ENCODE measurements at regions of chr6 and their contacts with region 1.

Region 1: GRCh38 chr6:54846243-54846856 is at the start of gene FAM83B:
- DNase-seq: peak; percentile 98
- H3K4me3 ChIP-seq: peak within 1 kb of the TSS; percentile 70 to 84 (median 82)
- H3K27ac ChIP-seq: peak within 1 kb of the TSS; percentile 99
- H3K4me1 ChIP-seq: peaks cover 27% of the 10 kb centered on the region
- H3K27me3 ChIP-seq: no peaks in the 10 kb centered on the region
- CTCF ChIP-seq: peak in 1 of 2 donors; percentile 8
- total RNA-seq, gene FAM83B: 52.2 to 101 TPM

Region 2: DNA sequence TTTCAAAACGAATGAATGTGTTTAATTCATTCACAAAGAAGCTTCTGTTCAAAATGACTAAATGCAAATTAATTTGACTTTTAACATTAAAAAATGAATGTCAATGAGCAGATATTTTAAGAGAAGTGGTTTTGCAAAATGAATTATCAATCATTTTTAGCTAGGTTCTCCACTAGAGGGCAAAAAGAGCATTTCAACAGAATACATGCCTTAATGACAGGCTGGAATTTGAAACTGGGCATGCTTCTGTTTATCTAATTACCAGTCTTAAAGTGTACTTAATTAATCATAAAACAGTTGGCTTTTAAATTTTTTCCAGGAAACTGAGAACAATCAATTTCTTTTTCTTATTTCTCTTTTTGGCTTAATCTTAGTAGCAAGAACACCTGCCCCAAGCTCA is 601.9 kb before region 1 on chr6:
- CTCF ChIA-PET with region 1: no interaction called
- dilution Hi-C with region 1: no loop called
- in situ Hi-C with region 1: no loop called
- intact Hi-C with region 1: loop called (anchors 5 kb)
- DNase-seq: peak; percentile 10
- H3K4me3 ChIP-seq: no peak overlapping the region
- H3K27ac ChIP-seq: no peak overlapping the region
- H3K4me1 ChIP-seq: no peaks in the 10 kb centered on the region
- H3K27me3 ChIP-seq: no peaks in the 10 kb centered on the region
- CTCF ChIP-seq: peak; percentile 63 to 67

Region 3: GRCh38 chr6:54473328-54473727 is 373.0 kb before region 1 on chr6:
- CTCF ChIA-PET with region 1: no interaction called
- dilution Hi-C with region 1: no loop called
- in situ Hi-C with region 1: no loop called
- intact Hi-C with region 1: no loop called
- DNase-seq: peak; percentile 26
- H3K4me3 ChIP-seq: no peak overlapping the region
- H3K27ac ChIP-seq: no peak overlapping the region
- H3K4me1 ChIP-seq: no peaks in the 10 kb centered on the region
- H3K27me3 ChIP-seq: no peaks in the 10 kb centered on the region
- CTCF ChIP-seq: no peak

Region 4: DNA sequence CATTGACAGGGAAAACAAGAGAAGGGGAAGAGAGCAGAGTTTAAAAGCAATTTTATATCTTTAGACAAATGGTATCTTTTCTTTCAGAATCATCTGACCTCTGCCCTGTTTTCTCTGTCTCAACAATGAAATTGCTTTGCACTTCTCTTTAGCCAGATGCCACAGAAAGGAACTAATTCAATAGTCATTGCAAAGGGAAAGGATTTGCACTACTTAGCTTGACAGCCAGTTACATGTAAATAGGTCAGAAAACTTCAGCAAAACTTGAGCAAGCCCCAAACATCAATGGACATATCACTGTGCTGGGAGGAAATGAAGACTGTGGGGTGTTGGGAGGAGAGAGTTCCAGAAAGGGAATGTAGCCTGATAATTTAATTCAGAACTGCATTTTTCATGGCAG is 181.1 kb before region 1 on chr6:
- CTCF ChIA-PET with region 1: no interaction called
- dilution Hi-C with region 1: no loop called
- in situ Hi-C with region 1: no loop called
- intact Hi-C with region 1: no loop called
- DNase-seq: no peak
- H3K4me3 ChIP-seq: no peak overlapping the region
- H3K27ac ChIP-seq: no peak overlapping the region
- H3K4me1 ChIP-seq: no peaks in the 10 kb centered on the region
- H3K27me3 ChIP-seq: no peaks in the 10 kb centered on the region
- CTCF ChIP-seq: no peak

Region 5: DNA sequence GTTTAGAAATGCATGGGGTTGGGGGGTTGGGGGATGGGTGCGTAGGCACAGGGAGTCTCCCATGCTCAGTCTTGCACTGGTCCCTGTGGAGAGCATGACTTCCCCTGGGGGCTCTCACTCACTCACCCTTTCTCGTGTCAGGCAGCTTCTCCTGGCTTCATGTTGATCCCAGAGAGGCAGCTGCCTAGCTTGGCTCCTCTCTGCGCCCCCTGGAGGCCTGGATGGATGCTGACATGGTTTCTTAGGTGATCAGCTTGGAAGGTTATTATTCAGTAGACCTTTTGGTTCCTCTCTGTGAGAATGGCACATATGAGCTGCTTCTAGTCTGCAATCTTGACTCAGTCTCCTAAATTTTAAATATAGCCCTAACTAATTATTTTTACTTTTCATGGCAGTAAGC is 109.1 kb before region 1 on chr6:
- CTCF ChIA-PET with region 1: no interaction called
- dilution Hi-C with region 1: no loop called
- in situ Hi-C with region 1: loop called in 1 of 2 experiments (anchors 25 kb)
- intact Hi-C with region 1: no loop called
- DNase-seq: no peak
- H3K4me3 ChIP-seq: no peak overlapping the region
- H3K27ac ChIP-seq: no peak overlapping the region
- H3K4me1 ChIP-seq: no peaks in the 10 kb centered on the region
- H3K27me3 ChIP-seq: no peaks in the 10 kb centered on the region
- CTCF ChIP-seq: peak; percentile 33 to 34

Region 6: DNA sequence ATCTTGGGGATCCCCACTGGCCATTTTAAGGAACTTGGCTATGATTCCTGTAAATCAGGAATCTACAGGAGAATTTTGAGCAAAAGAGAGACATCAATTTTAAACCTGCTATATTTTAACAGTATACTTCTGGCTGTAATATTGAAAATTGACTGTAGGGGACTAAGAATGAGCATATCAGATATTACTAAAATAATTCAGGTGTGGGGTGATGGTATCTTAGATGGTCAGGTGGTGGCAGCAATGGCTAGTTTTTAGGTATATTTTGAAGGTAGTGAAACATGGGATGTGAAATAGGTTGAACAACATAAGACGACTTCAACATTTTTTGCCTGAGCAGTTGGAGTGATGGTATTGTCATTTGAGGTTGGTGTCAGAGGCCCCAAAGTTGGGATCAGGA is 32.3 kb after region 1 on chr6:
- CTCF ChIA-PET with region 1: no interaction called
- dilution Hi-C with region 1: no loop called
- in situ Hi-C with region 1: no loop called
- intact Hi-C with region 1: loop called (anchors 2 kb)
- DNase-seq: no peak
- H3K4me3 ChIP-seq: no peak overlapping the region
- H3K27ac ChIP-seq: no peak overlapping the region
- H3K4me1 ChIP-seq: peaks cover 59% of the 10 kb centered on the region
- H3K27me3 ChIP-seq: no peaks in the 10 kb centered on the region
- CTCF ChIP-seq: no peak

Region 7: GRCh38 chr6:54910431-54910884 is 64.1 kb after region 1 on chr6:
- CTCF ChIA-PET with region 1: no interaction called
- dilution Hi-C with region 1: no loop called
- in situ Hi-C with region 1: no loop called
- intact Hi-C with region 1: no loop called
- DNase-seq: no peak
- H3K4me3 ChIP-seq: no peak overlapping the region
- H3K27ac ChIP-seq: no peak overlapping the region
- H3K4me1 ChIP-seq: no peaks in the 10 kb centered on the region
- H3K27me3 ChIP-seq: no peaks in the 10 kb centered on the region
- CTCF ChIP-seq: no peak

Region 8: DNA sequence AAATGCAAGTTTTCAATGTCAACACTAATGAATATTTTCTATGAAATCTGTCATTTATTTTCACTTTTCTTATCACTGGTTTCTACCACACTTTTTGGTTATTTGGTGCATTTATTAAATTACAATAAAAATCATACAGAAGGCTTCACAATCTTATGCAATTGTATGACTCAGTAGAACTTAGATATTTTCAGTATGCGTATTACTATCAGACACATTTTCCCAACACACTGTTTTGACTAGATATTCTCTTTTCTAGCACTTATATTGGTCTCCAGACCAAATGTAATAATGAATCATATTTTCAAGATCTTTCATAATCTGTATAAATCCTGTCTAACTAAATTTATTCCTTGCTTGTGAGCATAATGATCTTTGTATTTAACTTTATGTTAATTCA is 74.3 kb after region 1 on chr6:
- CTCF ChIA-PET with region 1: no interaction called
- dilution Hi-C with region 1: no loop called
- in situ Hi-C with region 1: no loop called
- intact Hi-C with region 1: loop called (anchors 2 kb)
- DNase-seq: peak; percentile 41
- H3K4me3 ChIP-seq: no peak overlapping the region
- H3K27ac ChIP-seq: no peak overlapping the region
- H3K4me1 ChIP-seq: peaks cover 14% of the 10 kb centered on the region
- H3K27me3 ChIP-seq: no peaks in the 10 kb centered on the region
- CTCF ChIP-seq: no peak

Region 9: DNA sequence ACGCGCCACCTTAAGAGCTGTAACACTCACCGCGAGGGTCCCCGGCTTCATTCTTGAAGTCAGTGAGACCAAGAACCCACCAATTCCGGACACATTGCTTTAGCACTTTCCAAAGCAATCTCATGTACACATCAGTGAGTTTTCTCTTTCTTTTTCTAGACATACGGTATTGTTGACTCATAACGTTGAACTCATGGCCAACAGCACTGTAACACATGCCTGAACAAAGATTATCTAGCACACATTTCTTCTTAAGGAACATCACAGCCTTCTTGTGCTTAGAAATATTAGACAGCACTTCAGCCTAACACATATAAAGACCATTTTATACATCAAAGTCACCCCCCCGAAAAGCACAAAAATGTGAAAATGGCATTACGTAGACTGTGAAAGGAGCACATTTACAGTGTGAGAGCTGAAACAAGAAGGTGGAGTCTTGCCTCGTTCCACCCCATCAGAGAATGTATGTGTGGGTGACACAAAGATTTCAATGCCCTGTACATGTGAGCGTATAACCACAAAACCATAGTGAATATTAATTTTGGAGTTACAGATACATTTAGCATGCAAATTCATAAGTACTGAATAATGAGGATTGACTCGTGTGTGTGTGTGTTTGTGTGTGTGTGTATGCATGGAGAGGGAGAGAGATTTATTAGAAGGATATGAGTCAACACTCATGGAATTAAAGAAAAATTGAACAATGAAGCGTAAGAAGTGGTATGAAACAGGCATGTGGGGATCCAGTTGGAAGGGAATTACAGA is 134.3 kb after region 1 on chr6:
- CTCF ChIA-PET with region 1: no interaction called
- dilution Hi-C with region 1: no loop called
- in situ Hi-C with region 1: no loop called
- intact Hi-C with region 1: loop called (anchors 5 kb)
- DNase-seq: peak; percentile 64
- H3K4me3 ChIP-seq: no peak overlapping the region
- H3K27ac ChIP-seq: peak overlapping the region; percentile 79
- H3K4me1 ChIP-seq: peaks cover 15% of the 10 kb centered on the region
- H3K27me3 ChIP-seq: no peaks in the 10 kb centered on the region
- CTCF ChIP-seq: no peak

Region 10: GRCh38 chr6:55011034-55011433 is 164.7 kb after region 1 on chr6:
- CTCF ChIA-PET with region 1: no interaction called
- dilution Hi-C with region 1: no loop called
- in situ Hi-C with region 1: no loop called
- intact Hi-C with region 1: no loop called
- DNase-seq: no peak
- H3K4me3 ChIP-seq: no peak overlapping the region
- H3K27ac ChIP-seq: no peak overlapping the region
- H3K4me1 ChIP-seq: no peaks in the 10 kb centered on the region
- H3K27me3 ChIP-seq: no peaks in the 10 kb centered on the region
- CTCF ChIP-seq: peak in 1 of 2 donors; percentile 15